Sigmoid colon (tissue), 7 donors: ENCODE measurements at regions of chr15 and their contacts with region 1.

Region 1: DNA sequence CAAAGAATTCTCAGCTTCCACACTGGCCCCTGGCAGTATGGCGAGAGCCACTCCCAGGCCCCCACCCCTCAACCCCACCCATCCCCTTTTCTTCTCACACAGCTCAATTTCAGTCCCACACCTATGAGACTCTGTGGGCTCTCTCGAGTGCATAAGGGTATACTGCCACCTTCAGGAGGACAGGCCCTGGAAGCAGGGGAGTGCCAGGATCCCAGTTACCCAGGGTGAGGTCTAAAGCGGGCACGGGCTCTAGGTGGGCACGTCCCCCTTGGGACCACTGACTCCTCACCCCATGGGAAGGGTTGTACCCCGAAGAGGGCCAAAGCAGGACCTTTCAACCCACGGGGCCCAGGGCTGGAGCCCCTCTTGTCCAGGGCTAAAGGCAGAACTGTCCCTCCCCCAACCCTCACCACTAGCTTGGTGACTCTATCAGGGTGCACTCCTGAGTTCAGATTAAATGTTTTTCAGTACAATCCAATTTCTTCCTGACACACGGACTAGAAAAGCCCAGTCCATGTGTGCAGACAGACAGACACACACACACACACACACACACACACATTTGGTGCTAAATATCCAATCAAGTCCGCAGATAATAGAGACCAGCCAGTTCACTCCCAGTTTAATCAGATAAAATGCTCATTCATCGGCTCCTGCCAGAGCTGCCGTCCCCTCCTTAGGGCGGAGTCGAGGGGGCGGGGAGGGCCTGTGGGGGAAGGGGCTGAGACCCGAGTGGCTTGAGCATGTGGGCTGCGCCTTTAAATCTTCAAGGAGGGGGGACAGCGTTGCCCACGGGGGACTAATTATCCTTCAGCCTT is 59.4 kb downstream of the CYP11A1 start:
- DNase-seq: peak; percentile 66
- H3K4me3 ChIP-seq: no peak overlapping the region
- H3K27ac ChIP-seq: no peak overlapping the region
- H3K4me1 ChIP-seq: no peaks in the 10 kb centered on the region
- H3K27me3 ChIP-seq: peaks cover 0 to 66% (median 25%) of the 10 kb centered on the region in 3 donors
- CTCF ChIP-seq: peak; percentile 11 to 63 (median 33)
- EP300 ChIP-seq: no peak
- POLR2A ChIP-seq: no peak

Region 2: DNA sequence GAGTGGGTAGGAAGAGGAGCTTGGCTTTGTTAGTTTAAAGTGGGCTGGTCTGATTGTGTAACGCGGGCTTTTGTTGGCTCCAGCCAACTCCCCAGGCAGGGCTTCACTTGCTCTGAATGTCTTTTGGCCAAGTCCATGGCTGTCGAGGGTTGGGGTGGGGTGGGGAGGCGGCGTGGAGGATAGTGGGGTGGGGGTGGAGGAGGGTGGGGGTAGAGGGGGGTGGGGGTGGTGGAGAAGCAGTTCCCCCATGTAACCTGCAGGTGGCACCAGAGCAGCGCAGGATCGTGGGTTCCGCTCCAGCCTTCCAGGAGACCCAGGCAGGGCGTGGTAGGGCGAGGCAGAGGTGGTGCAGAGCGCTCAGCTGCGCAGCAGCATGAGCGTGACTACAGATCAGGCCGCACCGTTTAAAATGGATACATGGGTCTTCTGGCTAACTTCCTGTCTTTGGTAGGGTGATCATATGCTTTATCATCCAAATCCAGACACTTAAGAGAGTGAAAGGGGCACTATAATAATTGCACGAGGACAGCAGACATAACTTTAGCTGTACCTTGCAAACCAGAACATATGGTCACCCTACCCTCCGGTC is 254.0 kb before region 1 on chr15:
- intact Hi-C with region 1: loop called (anchors 10 kb)
- DNase-seq: peak; percentile 94
- H3K4me3 ChIP-seq: peak overlapping the region in 2 of 4 donors; percentile 8 to 13
- H3K27ac ChIP-seq: peak overlapping the region in 3 of 4 donors; percentile 35 to 59 (median 38)
- H3K4me1 ChIP-seq: peaks cover 0 to 43% (median 38%) of the 10 kb centered on the region in 4 donors
- H3K27me3 ChIP-seq: no peaks in the 10 kb centered on the region
- CTCF ChIP-seq: peak in 3 of 4 experiments; percentile 18 to 79 (median 27)
- EP300 ChIP-seq: no peak
- POLR2A ChIP-seq: no peak

Region 3: GRCh38 chr15:74127260-74127953 is 180.6 kb before region 1 on chr15:
- intact Hi-C with region 1: loop called (anchors 1 kb)
- DNase-seq: peak; percentile 93
- H3K4me3 ChIP-seq: peak overlapping the region; percentile 18 to 43 (median 35)
- H3K27ac ChIP-seq: peak overlapping the region in 2 of 4 donors; percentile 41 to 43
- H3K4me1 ChIP-seq: peaks cover 0 to 39% (median 35%) of the 10 kb centered on the region in 4 donors
- H3K27me3 ChIP-seq: peaks cover 34 to 100% (median 78%) of the 10 kb centered on the region in 3 donors
- CTCF ChIP-seq: peak; percentile 93 to 98 (median 95)
- EP300 ChIP-seq: no peak
- POLR2A ChIP-seq: no peak

Region 4: GRCh38 chr15:74213858-74214284 is 94.2 kb before region 1 on chr15:
- intact Hi-C with region 1: no loop called
- DNase-seq: no peak
- H3K4me3 ChIP-seq: no peak overlapping the region
- H3K27ac ChIP-seq: no peak overlapping the region
- H3K4me1 ChIP-seq: peaks cover 0 to 8% (median 0%) of the 10 kb centered on the region in 4 donors
- H3K27me3 ChIP-seq: peaks cover 0 to 9% (median 0%) of the 10 kb centered on the region in 3 donors
- CTCF ChIP-seq: no peak
- EP300 ChIP-seq: no peak
- POLR2A ChIP-seq: no peak

Region 5: GRCh38 chr15:74857082-74857655 is 549.1 kb after region 1 on chr15:
- intact Hi-C with region 1: no loop called
- DNase-seq: no peak
- H3K4me3 ChIP-seq: no peak overlapping the region
- H3K27ac ChIP-seq: no peak overlapping the region
- H3K4me1 ChIP-seq: peaks cover 0 to 26% (median 12%) of the 10 kb centered on the region in 4 donors
- H3K27me3 ChIP-seq: no peaks in the 10 kb centered on the region
- CTCF ChIP-seq: no peak
- EP300 ChIP-seq: no peak
- POLR2A ChIP-seq: no peak